MCF 10A (cell line): ENCODE measurements at regions of chr17 and their contacts with region 1.

Region 1: GRCh38 chr17:38667099-38667786 is 7.5 kb downstream of the EPOP start:
- DNase-seq: peak; percentile 77
- H3K4me3 Mint-ChIP-seq: no peak overlapping the region
- H3K27ac Mint-ChIP-seq: no peak overlapping the region
- H3K4me1 Mint-ChIP-seq: peaks cover 6% of the 10 kb centered on the region
- H3K27me3 Mint-ChIP-seq: peaks cover 19% of the 10 kb centered on the region
- CTCF ChIP-seq: peak; percentile 99

Region 2: GRCh38 chr17:38428112-38428642 is 239.1 kb before region 1 on chr17 and contains the start of gene ARHGAP23:
- CTCF ChIA-PET with region 1: interaction called, 5 read pairs
- POLR2A ChIA-PET with region 1: no interaction called
- intact Hi-C with region 1: loop called (anchors 1 kb)
- DNase-seq: peak; percentile 21
- H3K4me3 Mint-ChIP-seq: peak within 1 kb of the TSS; percentile 59
- H3K27ac Mint-ChIP-seq: no peak within 1 kb of the TSS
- H3K4me1 Mint-ChIP-seq: peaks cover 15% of the 10 kb centered on the region
- H3K27me3 Mint-ChIP-seq: no peaks in the 10 kb centered on the region
- CTCF ChIP-seq: no peak
- total RNA-seq, gene ARHGAP23: 23.2 and 29.2 TPM in 2 replicates

Region 3: DNA sequence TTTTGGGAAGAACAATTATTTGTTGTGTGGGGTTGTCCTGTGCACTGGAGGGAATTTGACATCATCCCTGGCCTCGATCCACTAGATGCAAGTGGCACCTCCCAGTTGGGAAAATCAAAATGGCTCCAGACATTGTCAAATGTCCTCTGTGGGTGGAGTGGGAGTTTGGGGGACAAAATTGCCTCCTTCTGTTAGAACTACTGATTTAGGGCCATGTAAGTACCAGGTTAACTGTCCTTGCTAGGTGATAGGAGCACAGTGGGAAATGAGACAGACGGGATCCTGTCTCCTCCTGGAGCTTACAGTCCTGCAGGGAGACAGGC is 182.1 kb before region 1 on chr17:
- CTCF ChIA-PET with region 1: interaction called, 73 read pairs
- POLR2A ChIA-PET with region 1: no interaction called
- intact Hi-C with region 1: no loop called
- DNase-seq: no peak
- H3K4me3 Mint-ChIP-seq: no peak overlapping the region
- H3K27ac Mint-ChIP-seq: no peak overlapping the region
- H3K4me1 Mint-ChIP-seq: peaks cover 13% of the 10 kb centered on the region
- H3K27me3 Mint-ChIP-seq: no peaks in the 10 kb centered on the region
- CTCF ChIP-seq: no peak

Region 4: GRCh38 chr17:38498186-38498752 is 169.0 kb before region 1 on chr17:
- CTCF ChIA-PET with region 1: interaction called, 73 read pairs
- POLR2A ChIA-PET with region 1: no interaction called
- intact Hi-C with region 1: no loop called
- DNase-seq: no peak
- H3K4me3 Mint-ChIP-seq: no peak overlapping the region
- H3K27ac Mint-ChIP-seq: no peak overlapping the region
- H3K4me1 Mint-ChIP-seq: no peaks in the 10 kb centered on the region
- H3K27me3 Mint-ChIP-seq: no peaks in the 10 kb centered on the region
- CTCF ChIP-seq: no peak

Region 5: DNA sequence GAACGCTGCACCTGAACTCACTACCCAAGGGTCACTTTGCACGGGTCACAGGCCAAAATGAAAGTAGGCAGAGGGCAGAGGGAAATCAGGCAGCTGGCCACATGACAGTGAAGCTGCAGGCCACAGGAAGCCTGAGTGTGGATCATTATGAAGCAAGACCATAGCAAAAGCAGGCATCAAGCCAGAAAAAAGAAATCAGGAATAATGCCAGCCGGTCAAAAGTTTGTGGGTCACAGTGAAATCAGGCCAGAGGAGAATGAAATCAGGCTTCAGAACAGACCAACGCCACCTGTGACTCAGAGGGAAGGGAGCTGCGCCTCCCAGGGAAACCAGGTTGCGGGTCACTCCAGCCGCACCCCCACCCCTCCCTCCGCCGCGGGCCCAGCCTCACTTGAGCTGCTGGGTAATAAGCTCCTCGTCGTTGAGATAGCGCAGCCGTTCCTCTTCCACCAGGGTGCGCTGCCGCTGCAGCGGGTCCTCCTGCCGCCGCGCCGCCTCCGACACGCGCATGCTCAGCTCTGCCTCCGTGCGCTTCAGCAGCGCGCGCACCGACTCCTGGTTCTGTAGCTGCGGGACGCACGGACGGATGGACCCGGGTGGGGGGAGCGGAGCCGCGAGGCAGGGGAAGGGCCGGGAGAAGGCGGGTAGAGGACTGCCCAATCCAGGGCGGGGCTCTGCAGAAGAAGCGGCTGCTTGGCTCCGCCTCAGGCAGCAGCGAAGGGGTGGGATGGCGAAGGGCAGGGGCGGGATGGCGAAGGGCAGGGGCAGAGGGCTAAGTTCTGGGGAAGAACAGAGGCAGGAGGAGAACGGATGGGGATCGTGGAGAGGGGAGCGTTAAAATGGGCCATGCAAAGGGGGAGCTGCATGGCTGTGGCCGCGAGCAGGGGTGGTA is 109.2 kb before region 1 on chr17:
- CTCF ChIA-PET with region 1: interaction called, 29 read pairs
- POLR2A ChIA-PET with region 1: interaction called, 9 read pairs
- intact Hi-C with region 1: loop called (anchors 1 kb)
- DNase-seq: peak; percentile 97
- H3K4me3 Mint-ChIP-seq: peak overlapping the region; percentile 97
- H3K27ac Mint-ChIP-seq: peak overlapping the region; percentile 54
- H3K4me1 Mint-ChIP-seq: peaks cover 26% of the 10 kb centered on the region
- H3K27me3 Mint-ChIP-seq: no peaks in the 10 kb centered on the region
- CTCF ChIP-seq: peak; percentile 75

Region 6: GRCh38 chr17:38584350-38584925 is 82.8 kb before region 1 on chr17:
- CTCF ChIA-PET with region 1: interaction called, 20 read pairs
- POLR2A ChIA-PET with region 1: interaction called, 5 read pairs
- intact Hi-C with region 1: loop called (anchors 1 kb)
- DNase-seq: peak; percentile 76
- H3K4me3 Mint-ChIP-seq: peak overlapping the region; percentile 26
- H3K27ac Mint-ChIP-seq: no peak overlapping the region
- H3K4me1 Mint-ChIP-seq: peaks cover 13% of the 10 kb centered on the region
- H3K27me3 Mint-ChIP-seq: no peaks in the 10 kb centered on the region
- CTCF ChIP-seq: peak; percentile 96

Region 7: DNA sequence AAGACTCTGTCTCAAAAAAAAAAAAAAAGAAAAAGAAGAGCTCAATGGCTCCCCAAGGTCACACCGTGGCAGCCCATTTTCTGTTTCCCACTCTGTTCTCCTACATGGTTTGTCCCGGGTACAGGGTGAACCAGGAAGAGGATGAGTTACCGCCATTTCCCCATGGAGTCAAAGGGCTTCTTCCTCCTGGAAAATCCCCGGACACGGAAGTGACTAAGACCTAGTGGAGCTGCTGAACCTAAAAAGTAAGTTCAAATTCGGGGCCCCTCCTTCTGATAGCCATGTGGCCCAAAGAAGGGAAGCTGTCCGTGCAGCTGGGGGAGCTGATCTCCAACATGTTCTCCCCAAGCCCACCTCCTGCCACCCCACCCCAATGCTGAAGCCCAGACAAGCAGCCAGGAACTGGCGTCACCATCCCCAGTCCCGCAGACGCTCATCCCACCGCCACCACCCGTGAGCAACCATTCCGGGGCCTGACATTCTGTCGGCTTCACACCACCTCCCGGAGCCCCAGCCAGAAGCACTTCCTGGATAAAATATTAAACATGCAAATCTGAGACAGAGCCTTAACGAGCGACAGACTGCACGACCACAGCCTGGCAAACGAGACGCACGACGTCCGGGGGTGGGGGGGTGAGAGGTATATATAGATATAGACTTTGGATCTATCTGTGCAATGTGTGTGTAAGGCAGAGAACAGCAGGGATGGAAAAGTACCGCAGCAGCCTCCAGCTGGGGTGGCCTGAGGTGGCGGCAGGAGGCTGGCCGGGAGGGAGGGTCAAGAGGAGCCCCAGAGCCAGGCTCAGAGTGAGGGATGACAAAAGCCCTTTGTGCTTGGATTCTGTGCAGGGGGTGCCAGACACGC is 10.1 kb before region 1 on chr17:
- CTCF ChIA-PET with region 1: interaction called, 15 read pairs
- POLR2A ChIA-PET with region 1: no interaction called
- intact Hi-C with region 1: no loop called
- DNase-seq: no peak
- H3K4me3 Mint-ChIP-seq: no peak overlapping the region
- H3K27ac Mint-ChIP-seq: no peak overlapping the region
- H3K4me1 Mint-ChIP-seq: no peaks in the 10 kb centered on the region
- H3K27me3 Mint-ChIP-seq: peaks cover 26% of the 10 kb centered on the region
- CTCF ChIP-seq: no peak

Region 8: DNA sequence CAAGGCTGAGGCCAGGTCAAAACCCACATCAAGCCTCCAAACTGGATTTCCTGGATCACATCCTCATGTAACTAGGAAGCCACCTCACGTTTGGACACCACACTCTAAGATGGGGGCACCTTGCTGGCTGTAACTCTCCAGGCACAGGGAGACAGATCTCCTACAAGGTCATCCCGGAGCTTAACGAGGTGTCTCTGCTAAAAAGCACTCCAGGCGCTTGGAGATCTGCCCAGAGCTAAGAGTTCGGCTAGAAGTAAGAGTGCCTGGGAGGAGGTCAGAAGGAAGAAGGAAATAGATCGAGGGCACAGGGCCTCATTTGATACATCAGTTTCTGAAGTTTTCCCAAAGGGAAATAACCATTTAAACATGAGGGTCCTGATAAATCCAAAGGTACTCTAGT is 101.2 kb after region 1 on chr17:
- CTCF ChIA-PET with region 1: no interaction called
- POLR2A ChIA-PET with region 1: no interaction called
- intact Hi-C with region 1: no loop called
- DNase-seq: no peak
- H3K4me3 Mint-ChIP-seq: no peak overlapping the region
- H3K27ac Mint-ChIP-seq: no peak overlapping the region
- H3K4me1 Mint-ChIP-seq: peaks cover 4% of the 10 kb centered on the region
- H3K27me3 Mint-ChIP-seq: no peaks in the 10 kb centered on the region
- CTCF ChIP-seq: no peak

Region 9: DNA sequence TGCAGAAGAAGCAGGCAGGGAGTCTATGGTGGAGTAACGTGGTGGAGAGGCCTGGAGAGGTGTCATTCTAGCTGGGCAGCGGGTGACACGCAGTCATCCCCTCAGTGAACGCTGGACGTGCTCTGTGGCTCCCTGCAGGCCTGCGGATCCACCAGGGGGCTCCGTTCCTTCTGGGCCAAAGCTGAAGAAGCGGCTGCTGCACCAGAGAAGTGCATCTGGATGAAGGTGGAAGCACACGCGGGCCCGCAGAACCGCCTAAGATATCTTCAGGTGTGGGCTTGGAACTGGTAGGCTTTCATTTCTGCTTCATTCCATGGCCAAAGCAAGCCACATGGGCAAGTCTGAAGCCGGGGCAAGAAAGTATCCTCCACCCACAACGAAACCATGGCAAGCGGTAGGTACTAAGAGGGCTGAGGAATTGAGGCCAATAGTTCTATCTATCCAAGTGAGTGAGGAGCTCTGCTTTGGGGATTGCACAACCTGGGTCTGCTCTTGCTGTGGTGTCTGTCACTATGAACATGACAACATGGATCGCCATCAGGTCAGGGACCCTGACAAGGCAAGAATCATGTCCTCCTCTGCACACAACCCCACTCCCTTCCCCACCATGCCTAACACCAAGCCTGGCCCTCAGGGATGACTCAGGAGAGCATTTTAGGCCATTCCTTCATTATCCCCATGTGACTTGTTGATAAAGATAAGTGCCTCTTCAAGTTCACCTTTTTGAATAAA is 378.9 kb after region 1 on chr17:
- CTCF ChIA-PET with region 1: no interaction called
- POLR2A ChIA-PET with region 1: no interaction called
- intact Hi-C with region 1: no loop called
- DNase-seq: no peak
- H3K4me3 Mint-ChIP-seq: no peak overlapping the region
- H3K27ac Mint-ChIP-seq: peak overlapping the region; percentile 91
- H3K4me1 Mint-ChIP-seq: no peaks in the 10 kb centered on the region
- H3K27me3 Mint-ChIP-seq: peaks cover 9% of the 10 kb centered on the region
- CTCF ChIP-seq: no peak